ENCODE measurements at regions of chr19 and their contacts with region 1.

Region 1: DNA sequence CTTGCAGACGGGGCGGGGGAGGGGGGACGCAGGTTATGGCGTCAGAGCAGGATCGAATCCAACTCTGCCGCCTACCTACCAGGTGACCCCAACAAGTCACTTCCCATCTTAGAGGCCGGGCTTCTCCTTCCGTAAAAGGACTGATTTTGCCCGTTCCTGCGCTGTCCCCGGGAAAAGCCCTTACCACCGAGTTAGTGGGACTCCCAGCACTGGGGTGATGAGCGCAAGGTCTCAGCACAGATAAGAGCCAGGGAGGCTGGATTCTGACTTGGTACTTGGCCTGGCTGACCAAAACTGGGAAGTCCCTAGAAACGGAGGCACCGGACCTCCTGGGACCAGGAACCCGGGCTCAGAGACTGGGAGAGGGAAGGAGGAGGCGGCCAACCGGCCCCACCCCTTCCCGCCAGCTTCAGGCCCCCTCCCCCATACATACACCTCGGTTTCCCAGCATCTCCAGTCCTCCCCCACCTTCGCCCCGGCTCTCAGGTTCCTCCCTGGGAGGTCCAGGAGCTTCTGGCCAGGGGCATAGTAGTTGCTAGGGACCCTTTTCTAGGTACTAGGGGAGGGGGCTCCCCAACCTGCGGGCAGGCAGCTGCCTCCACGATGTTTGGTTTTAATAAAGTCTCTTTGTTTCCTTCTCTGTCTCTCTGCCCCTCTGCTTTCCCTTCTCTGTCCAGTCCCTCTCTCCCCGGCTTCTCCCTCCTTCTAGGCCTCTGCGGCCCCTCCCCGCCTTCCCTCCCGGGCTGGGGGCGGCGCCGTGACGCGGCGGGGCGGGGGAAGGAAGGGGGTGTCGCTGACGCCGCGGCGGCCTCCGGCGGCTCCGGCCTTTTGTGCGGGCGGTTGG is at the start of gene GRAMD1A:
- DNase-seq: peak; percentile 76 to 86
- ATAC-seq: peak; percentile 83
- H3K4me3 ChIP-seq: peak within 1 kb of the TSS; percentile 67 to 84 (median 73)
- H3K27ac ChIP-seq: peak within 1 kb of the TSS; percentile 91 to 99 (median 97)
- H3K4me1 ChIP-seq: peaks cover 29 to 38% of the 10 kb centered on the region in 2 donors
- H3K27me3 ChIP-seq: no peaks in the 10 kb centered on the region
- CTCF ChIP-seq: no peak
- POLR2A ChIP-seq: peak; percentile 6 to 79
- total RNA-seq, gene GRAMD1A: 38.8 to 45.1 (median 43.7) TPM

Region 2: GRCh38 chr19:34894780-34895179 is 104.9 kb before region 1 on chr19:
- in situ Hi-C with region 1: no loop called
- intact Hi-C with region 1: no loop called
- DNase-seq: no peak
- ATAC-seq: no peak
- H3K4me3 ChIP-seq: no peak overlapping the region
- H3K27ac ChIP-seq: no peak overlapping the region
- H3K4me1 ChIP-seq: no peaks in the 10 kb centered on the region
- H3K27me3 ChIP-seq: no peaks in the 10 kb centered on the region
- CTCF ChIP-seq: no peak
- POLR2A ChIP-seq: no peak

Region 3: GRCh38 chr19:35030257-35031071 is 30.7 kb after region 1 on chr19 and contains the start of gene SCN1B:
- in situ Hi-C with region 1: no loop called
- intact Hi-C with region 1: loop called (anchors 1 kb)
- DNase-seq: peak; percentile 61 to 80
- ATAC-seq: peak; percentile 60 to 67
- H3K4me3 ChIP-seq: peak within 1 kb of the TSS; percentile 55 to 78 (median 68)
- H3K27ac ChIP-seq: peak within 1 kb of the TSS; percentile 97 to 98 (median 98)
- H3K4me1 ChIP-seq: peaks cover 61 to 62% of the 10 kb centered on the region in 2 donors
- H3K27me3 ChIP-seq: no peaks in the 10 kb centered on the region
- CTCF ChIP-seq: no peak
- POLR2A ChIP-seq: peak; percentile 74 to 81
- total RNA-seq, gene SCN1B: 194 to 469 (median 289) TPM

Region 4: DNA sequence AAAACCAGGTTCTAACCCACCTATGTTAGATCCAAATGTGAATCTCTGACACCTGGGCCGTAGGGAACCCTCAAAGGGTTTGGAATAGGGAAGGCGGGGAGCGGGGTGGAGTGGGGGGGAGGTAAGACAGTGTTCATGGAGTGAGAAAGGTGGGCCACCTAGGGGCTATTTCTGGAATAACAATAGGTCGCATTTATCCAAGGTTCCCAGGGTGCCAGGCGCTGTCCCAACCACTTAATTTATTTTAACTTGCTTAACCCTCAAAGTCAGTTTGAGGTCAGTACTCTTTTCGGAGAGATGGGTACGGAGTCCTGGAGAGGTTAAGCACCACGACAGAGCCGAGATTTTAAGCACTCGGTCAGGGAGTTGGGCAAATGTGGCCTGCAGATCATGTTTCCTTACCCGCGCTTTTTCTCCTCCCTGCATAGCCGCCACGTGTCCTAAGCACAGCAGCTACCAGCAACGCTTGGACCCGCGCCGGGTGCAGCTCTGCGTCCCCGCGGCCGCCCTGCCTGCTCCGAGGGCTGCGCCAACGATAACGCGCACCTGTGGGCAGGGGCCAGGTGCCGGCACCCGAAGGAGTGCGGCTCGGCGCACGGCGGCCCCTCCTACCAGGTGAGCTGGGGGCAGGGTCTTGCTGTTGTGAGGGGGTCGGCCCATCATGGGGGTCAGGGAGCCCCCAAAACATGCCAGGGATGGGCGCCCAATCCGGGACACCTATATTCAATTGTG is 91.0 kb after region 1 on chr19:
- in situ Hi-C with region 1: no loop called
- intact Hi-C with region 1: no loop called
- DNase-seq: peak; percentile 52 to 72
- ATAC-seq: peak; percentile 94 to 96
- H3K4me3 ChIP-seq: peak overlapping the region in 3 of 4 donors; percentile 4 to 35 (median 23)
- H3K27ac ChIP-seq: peak overlapping the region; percentile 31 to 61 (median 49)
- H3K4me1 ChIP-seq: peaks cover 9 to 15% of the 10 kb centered on the region in 2 donors
- H3K27me3 ChIP-seq: no peaks in the 10 kb centered on the region
- CTCF ChIP-seq: peak; percentile 72 to 77 (median 75)
- POLR2A ChIP-seq: no peak